RWPE1 (cell line): ENCODE measurements at regions of chr5 and their contacts with region 1.

Region 1: GRCh38 chr5:155004138-155004744 is 9.3 kb upstream of the KIF4B start:
- DNase-seq: peak; percentile 16
- H3K27ac ChIP-seq: no peak overlapping the region
- CTCF ChIP-seq: peak; percentile 38; the same call in 1 of the 2 replicates

Region 2: GRCh38 chr5:154878642-154879335 is 125.5 kb before region 1 on chr5:
- CTCF ChIA-PET with region 1: no interaction called
- POLR2A ChIA-PET with region 1: no interaction called
- DNase-seq: no peak
- H3K27ac ChIP-seq: no peak overlapping the region
- CTCF ChIP-seq: no peak

Region 3: GRCh38 chr5:154916884-154917283 is 87.4 kb before region 1 on chr5:
- CTCF ChIA-PET with region 1: no interaction called
- POLR2A ChIA-PET with region 1: no interaction called
- DNase-seq: no peak
- H3K27ac ChIP-seq: no peak overlapping the region
- CTCF ChIP-seq: no peak

Region 4: GRCh38 chr5:154972476-154973080 is 31.7 kb before region 1 on chr5:
- CTCF ChIA-PET with region 1: interaction called, 13 read pairs
- POLR2A ChIA-PET with region 1: no interaction called
- DNase-seq: peak; percentile 53
- H3K27ac ChIP-seq: no peak overlapping the region
- CTCF ChIP-seq: peak; percentile 48